A673 (cell line): ENCODE measurements at regions of chrX and their contacts with region 1.

Region 1: DNA sequence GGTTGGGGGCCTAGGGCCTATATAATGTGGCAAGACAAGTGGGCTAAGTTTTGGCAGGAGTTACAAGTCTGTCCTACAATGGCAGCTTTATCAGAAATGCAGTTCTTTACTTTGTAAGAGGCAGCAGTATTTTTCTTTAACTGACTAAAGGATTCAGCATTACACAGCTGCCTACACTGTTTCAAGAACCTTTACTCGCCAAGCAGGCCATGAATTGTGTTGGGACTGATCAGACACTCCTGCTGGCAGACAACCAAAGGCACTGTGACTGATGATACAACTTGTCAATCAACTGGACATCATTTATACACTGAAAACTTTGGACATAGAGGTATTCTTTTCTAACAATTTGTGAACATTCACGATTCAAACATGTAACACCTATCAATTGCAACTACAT is 4.3 kb downstream of the MORC4 start:
- DNase-seq: no peak
- H3K4me3 ChIP-seq: no peak overlapping the region
- H3K27ac ChIP-seq: no peak overlapping the region
- H3K4me1 ChIP-seq: no peaks in the 10 kb centered on the region
- H3K27me3 ChIP-seq: no peaks in the 10 kb centered on the region
- CTCF ChIP-seq: no peak

Region 2: DNA sequence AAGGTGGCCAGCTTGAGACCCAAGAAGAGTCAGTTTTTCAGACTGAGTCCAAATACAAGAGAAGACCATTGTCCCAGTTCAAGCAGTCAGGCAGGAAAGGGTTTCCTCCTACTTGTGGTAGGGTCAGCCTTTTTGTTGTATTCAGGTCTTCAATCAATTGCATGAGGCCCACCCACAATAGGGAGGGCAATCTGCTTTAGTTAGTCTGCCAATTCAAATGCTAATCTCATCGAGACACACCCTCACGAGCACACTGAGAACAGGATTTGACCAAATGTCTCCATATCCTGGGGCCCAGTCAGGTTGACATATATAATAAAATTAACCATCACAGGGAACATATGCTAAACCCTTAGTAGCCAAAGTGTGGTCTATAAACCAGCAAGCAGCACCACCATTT is 378.5 kb after region 1 on chrX:
- CTCF ChIA-PET with region 1: interaction called, 11 read pairs
- POLR2A ChIA-PET with region 1: no interaction called
- intact Hi-C with region 1: no loop called
- DNase-seq: no peak
- H3K4me3 ChIP-seq: no peak overlapping the region
- H3K27ac ChIP-seq: no peak overlapping the region
- H3K4me1 ChIP-seq: no peaks in the 10 kb centered on the region
- H3K27me3 ChIP-seq: no peaks in the 10 kb centered on the region
- CTCF ChIP-seq: no peak